Activated B cell treated with CpG ODN at 0.5 μM for 24 hours (primary cell): ENCODE measurements at regions of chr9 and their contacts with region 1.

Region 1: DNA sequence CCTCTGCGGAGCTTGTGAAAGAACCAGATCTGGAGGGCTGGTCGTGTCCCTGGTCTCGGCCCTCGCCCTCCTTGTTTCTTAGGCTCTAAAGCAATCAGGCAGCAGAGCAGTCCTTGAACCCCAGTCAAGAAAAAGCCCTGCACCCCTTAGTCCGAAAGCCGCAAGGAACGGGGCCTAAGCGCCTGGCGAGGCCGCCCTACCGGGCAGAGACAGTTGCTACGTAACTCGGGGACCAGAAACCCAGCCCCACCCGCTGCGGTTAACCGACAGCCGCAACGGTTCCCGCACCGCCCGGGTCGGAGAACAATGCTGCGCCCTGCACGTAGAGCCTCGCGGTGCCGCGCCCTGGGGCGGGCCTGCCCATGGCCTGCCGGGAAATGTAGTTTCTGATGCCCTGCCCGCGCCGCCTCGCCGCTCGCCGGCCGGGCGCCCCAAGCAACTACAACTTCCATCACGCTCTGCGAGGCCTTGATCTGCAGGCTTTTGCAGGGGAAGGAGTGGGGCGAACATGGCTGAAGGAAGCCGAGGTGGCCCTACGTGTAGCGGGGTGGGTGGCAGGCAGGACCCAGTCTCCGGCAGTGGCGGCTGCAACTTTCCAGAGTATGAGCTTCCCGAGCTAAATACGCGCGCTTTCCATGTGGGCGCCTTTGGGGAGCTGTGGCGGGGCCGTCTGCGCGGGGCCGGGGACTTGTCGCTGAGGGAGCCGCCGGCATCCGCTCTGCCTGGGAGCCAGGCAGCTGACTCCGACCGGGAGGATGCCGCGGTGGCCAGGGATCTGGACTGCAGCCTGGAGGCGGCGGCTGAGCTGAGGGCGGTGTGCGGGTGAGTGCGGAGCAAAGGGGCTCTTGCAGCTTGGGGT is at the start of gene SNAPC3:
- DNase-seq: peak; percentile 90
- ATAC-seq: peak; percentile 95
- H3K4me3 Mint-ChIP-seq: peak within 1 kb of the TSS; percentile 91
- H3K27ac Mint-ChIP-seq: peak within 1 kb of the TSS; percentile 87
- H3K4me1 Mint-ChIP-seq: peaks cover 39% of the 10 kb centered on the region
- H3K27me3 Mint-ChIP-seq: no peaks in the 10 kb centered on the region
- CTCF ChIP-seq: no peak
- total RNA-seq, gene SNAPC3: 36.4 and 37.6 TPM in 2 replicates

Region 2: DNA sequence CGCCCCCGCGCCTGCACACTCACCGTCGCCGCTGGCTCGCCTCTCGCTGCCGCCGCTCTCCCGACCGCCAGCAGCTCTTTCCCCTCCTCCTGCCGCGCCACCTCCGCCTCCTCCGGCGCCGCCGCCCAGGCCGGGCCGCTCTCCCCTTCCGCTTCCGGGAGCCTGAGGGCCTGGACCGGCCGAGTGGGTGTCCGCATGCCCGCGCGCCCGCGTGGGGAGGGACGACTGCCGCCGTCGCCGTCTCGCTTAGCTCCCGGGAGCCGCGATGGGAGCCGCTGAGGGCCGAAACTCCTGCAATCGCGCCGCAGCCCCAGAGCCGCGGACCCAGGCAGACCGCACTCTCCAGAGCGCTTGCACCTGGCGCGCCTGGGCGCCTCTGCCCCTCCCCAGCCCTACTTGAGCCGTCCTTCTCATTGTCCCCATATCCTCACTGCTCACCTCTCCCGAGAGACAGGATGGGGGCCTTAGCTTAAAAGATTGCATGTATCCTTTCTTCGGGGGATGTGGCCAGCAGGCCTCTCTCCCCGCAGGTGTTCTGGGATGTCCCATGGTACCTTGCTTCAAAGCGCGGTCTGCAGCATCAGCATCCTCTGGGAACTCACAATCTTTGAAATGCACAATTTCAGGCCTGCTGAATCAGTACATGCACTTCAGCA is 729.3 kb before region 1 on chr9 and contains the start of gene ZDHHC21:
- CTCF ChIA-PET with region 1: no interaction called
- POLR2A ChIA-PET with region 1: no interaction called
- intact Hi-C with region 1: loop called (anchors 10 kb)
- DNase-seq: peak; percentile 60
- ATAC-seq: peak; percentile 75
- H3K4me3 Mint-ChIP-seq: peak within 1 kb of the TSS; percentile 94
- H3K27ac Mint-ChIP-seq: peak within 1 kb of the TSS; percentile 93
- H3K4me1 Mint-ChIP-seq: peaks cover 51% of the 10 kb centered on the region
- H3K27me3 Mint-ChIP-seq: no peaks in the 10 kb centered on the region
- CTCF ChIP-seq: no peak
- total RNA-seq, gene ZDHHC21: 22.6 and 29.4 TPM in 2 replicates

Region 3: GRCh38 chr9:15231788-15232635 is 190.6 kb before region 1 on chr9:
- CTCF ChIA-PET with region 1: no interaction called
- POLR2A ChIA-PET with region 1: interaction called, 3 read pairs
- intact Hi-C with region 1: loop called (anchors 5 kb)
- DNase-seq: no peak
- ATAC-seq: peak; percentile 56
- H3K4me3 Mint-ChIP-seq: no peak overlapping the region
- H3K27ac Mint-ChIP-seq: no peak overlapping the region
- H3K4me1 Mint-ChIP-seq: peaks cover 19% of the 10 kb centered on the region
- H3K27me3 Mint-ChIP-seq: no peaks in the 10 kb centered on the region
- CTCF ChIP-seq: no peak

Region 4: GRCh38 chr9:15306757-15307534 is 115.7 kb before region 1 on chr9 and contains the start of gene TTC39B:
- CTCF ChIA-PET with region 1: no interaction called
- POLR2A ChIA-PET with region 1: interaction called, 7 read pairs
- intact Hi-C with region 1: loop called (anchors 1 kb)
- DNase-seq: peak; percentile 70
- ATAC-seq: peak; percentile 85
- H3K4me3 Mint-ChIP-seq: peak within 1 kb of the TSS; percentile 97
- H3K27ac Mint-ChIP-seq: peak within 1 kb of the TSS; percentile 85
- H3K4me1 Mint-ChIP-seq: peaks cover 29% of the 10 kb centered on the region
- H3K27me3 Mint-ChIP-seq: no peaks in the 10 kb centered on the region
- CTCF ChIP-seq: no peak
- total RNA-seq, gene TTC39B: 3.2 and 6.6 TPM in 2 replicates

Region 5: DNA sequence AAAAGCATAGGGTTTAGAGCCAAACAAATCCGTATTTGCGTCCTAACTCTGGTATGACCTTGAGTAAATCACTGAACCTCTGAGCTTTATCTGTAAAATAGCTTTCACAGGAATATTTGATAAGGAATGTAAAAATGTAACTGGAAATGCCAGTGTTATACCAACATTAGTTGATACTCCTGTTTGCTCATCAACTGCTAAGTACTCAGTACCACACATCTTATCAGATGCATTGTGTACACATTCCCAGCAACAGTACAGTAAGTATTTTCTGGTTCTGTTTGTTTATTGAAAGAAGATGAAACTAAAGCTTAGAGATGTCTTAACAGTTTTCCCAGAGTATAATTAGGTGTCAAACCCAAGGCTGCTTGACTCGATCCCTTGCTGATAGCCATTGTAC is 21.5 kb after region 1 on chr9:
- CTCF ChIA-PET with region 1: no interaction called
- POLR2A ChIA-PET with region 1: no interaction called
- intact Hi-C with region 1: loop called (anchors 2 kb)
- DNase-seq: no peak
- ATAC-seq: no peak
- H3K4me3 Mint-ChIP-seq: no peak overlapping the region
- H3K27ac Mint-ChIP-seq: no peak overlapping the region
- H3K4me1 Mint-ChIP-seq: no peaks in the 10 kb centered on the region
- H3K27me3 Mint-ChIP-seq: no peaks in the 10 kb centered on the region
- CTCF ChIP-seq: no peak

Region 6: DNA sequence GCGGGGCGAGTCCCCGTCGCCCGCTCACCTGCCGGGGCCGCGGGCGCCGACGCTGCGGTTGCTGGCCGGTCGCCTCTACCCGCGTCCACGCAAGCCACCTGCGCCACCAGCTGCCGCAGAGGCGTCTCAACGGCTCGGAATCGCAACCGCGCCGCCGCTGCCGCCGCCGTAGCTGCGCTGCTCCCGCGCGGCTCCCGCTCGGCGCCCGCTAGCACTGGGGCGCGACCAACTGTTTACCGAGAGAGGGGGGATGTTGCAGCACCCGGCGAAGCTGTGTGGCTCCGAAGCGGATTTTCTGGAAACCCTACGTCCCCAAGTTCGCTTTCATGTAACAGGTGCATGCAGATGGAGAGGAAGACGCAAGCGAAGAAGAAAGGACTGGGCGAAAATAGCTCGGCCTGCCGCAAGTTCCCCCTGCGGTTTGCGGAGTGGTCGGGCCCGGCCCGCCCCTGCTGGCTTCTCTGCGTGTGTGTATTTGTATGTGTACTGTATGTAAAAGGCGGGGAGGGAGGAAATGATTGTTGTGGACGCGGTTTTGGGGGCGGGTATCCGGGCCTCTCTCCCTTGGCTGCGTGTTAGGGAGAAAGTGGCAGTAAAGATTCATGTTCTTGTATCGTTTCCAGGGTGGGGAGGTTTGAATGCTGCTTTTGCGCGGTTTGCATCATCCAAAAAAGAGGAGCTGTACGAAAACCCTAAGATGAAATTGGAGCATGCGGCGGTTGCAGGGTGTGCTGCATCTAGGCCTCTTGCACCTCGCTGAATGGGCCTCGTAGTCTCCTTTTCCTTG is 88.4 kb after region 1 on chr9 and contains the start of gene PSIP1:
- CTCF ChIA-PET with region 1: interaction called, 3 read pairs
- POLR2A ChIA-PET with region 1: interaction called, 16 read pairs
- intact Hi-C with region 1: loop called (anchors 1 kb)
- DNase-seq: peak; percentile 85
- ATAC-seq: peak; percentile 78
- H3K4me3 Mint-ChIP-seq: peak within 1 kb of the TSS; percentile 97
- H3K27ac Mint-ChIP-seq: peak within 1 kb of the TSS; percentile 100
- H3K4me1 Mint-ChIP-seq: peaks cover 56% of the 10 kb centered on the region
- H3K27me3 Mint-ChIP-seq: no peaks in the 10 kb centered on the region
- CTCF ChIP-seq: no peak
- total RNA-seq, gene PSIP1: 56.8 and 57.2 TPM in 2 replicates

Region 7: GRCh38 chr9:15606643-15607472 is 184.3 kb after region 1 on chr9:
- CTCF ChIA-PET with region 1: no interaction called
- POLR2A ChIA-PET with region 1: no interaction called
- intact Hi-C with region 1: loop called (anchors 5 kb)
- DNase-seq: no peak
- ATAC-seq: no peak
- H3K4me3 Mint-ChIP-seq: no peak overlapping the region
- H3K27ac Mint-ChIP-seq: no peak overlapping the region
- H3K4me1 Mint-ChIP-seq: no peaks in the 10 kb centered on the region
- H3K27me3 Mint-ChIP-seq: no peaks in the 10 kb centered on the region
- CTCF ChIP-seq: peak; percentile 66